ENCODE measurements at regions of chr4 and their contacts with region 1.

Region 1: GRCh38 chr4:373062-373839 is 35.6 kb downstream of the ZNF141 start:
- DNase-seq: no peak
- ATAC-seq: no peak
- H3K4me3 ChIP-seq: no peak overlapping the region
- H3K4me3 Mint-ChIP-seq: no peak overlapping the region
- H3K27ac ChIP-seq: no peak overlapping the region
- H3K27ac Mint-ChIP-seq: no peak overlapping the region
- H3K4me1 ChIP-seq: no peaks in the 10 kb centered on the region
- H3K4me1 Mint-ChIP-seq: no peaks in the 10 kb centered on the region
- H3K27me3 ChIP-seq: no peaks in the 10 kb centered on the region
- H3K27me3 Mint-ChIP-seq: no peaks in the 10 kb centered on the region
- CTCF ChIP-seq: no peak

Region 2: GRCh38 chr4:173671-174332 is 199.4 kb before region 1 on chr4:
- CTCF ChIA-PET with region 1: no interaction called
- POLR2A ChIA-PET with region 1: no interaction called
- intact Hi-C with region 1: no loop called
- DNase-seq: no peak
- ATAC-seq: no peak
- H3K4me3 ChIP-seq: no peak overlapping the region
- H3K4me3 Mint-ChIP-seq: no peak overlapping the region
- H3K27ac ChIP-seq: no peak overlapping the region
- H3K27ac Mint-ChIP-seq: no peak overlapping the region
- H3K4me1 ChIP-seq: no peaks in the 10 kb centered on the region
- H3K4me1 Mint-ChIP-seq: no peaks in the 10 kb centered on the region
- H3K27me3 ChIP-seq: no peaks in the 10 kb centered on the region
- H3K27me3 Mint-ChIP-seq: no peaks in the 10 kb centered on the region
- CTCF ChIP-seq: no peak

Region 3: GRCh38 chr4:445410-445809 is 72.2 kb after region 1 on chr4:
- CTCF ChIA-PET with region 1: no interaction called
- POLR2A ChIA-PET with region 1: no interaction called
- intact Hi-C with region 1: loop called in 1 of 2 experiments (anchors 5 kb)
- DNase-seq: no peak
- ATAC-seq: no peak
- H3K4me3 ChIP-seq: no peak overlapping the region
- H3K4me3 Mint-ChIP-seq: no peak overlapping the region
- H3K27ac ChIP-seq: no peak overlapping the region
- H3K27ac Mint-ChIP-seq: no peak overlapping the region
- H3K4me1 ChIP-seq: no peaks in the 10 kb centered on the region
- H3K4me1 Mint-ChIP-seq: no peaks in the 10 kb centered on the region
- H3K27me3 ChIP-seq: no peaks in the 10 kb centered on the region
- H3K27me3 Mint-ChIP-seq: no peaks in the 10 kb centered on the region
- CTCF ChIP-seq: no peak

Region 4: DNA sequence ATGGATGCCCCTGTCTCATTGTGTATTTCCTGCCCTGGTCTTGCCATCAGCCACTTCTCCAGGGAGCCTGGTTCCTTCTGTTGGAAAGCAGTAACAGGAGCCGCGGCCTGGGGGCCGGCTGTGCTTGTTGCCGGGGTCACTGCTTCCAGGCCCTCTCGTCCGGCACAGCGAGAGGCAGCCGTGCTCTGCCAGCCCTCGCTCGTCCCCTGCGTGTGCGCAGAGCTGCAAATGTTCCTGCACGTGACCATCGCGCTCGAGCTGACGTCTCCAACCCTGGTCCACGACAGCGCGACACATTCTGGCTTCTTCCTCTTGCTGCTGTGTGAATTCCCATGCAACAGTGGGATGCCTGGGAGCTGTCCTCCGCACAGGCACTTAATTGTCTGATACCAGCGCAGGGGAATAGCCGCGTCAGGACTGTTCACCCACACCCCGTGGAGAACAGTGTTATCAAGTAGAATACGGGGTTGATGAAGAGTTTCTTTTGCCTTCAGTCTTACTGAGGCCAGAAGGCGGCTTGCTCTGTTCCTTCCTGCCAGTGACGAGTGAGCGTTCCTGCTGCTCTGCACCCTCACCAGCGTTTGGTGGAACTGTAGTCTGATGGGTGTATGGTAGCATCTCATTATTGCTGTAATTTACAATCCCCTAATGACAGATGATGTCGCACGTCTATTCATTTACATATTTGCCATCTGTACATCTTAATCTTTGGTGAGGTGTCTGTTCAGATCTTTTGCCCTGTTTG is 264.5 kb after region 1 on chr4:
- CTCF ChIA-PET with region 1: no interaction called
- POLR2A ChIA-PET with region 1: no interaction called
- intact Hi-C with region 1: no loop called
- DNase-seq: no peak
- ATAC-seq: no peak
- H3K4me3 ChIP-seq: no peak overlapping the region
- H3K4me3 Mint-ChIP-seq: no peak overlapping the region
- H3K27ac ChIP-seq: no peak overlapping the region
- H3K27ac Mint-ChIP-seq: no peak overlapping the region
- H3K4me1 ChIP-seq: no peaks in the 10 kb centered on the region
- H3K4me1 Mint-ChIP-seq: no peaks in the 10 kb centered on the region
- H3K27me3 ChIP-seq: peaks cover 0 to 6% of the 10 kb centered on the region in 2 experiments
- H3K27me3 Mint-ChIP-seq: peaks cover 10% of the 10 kb centered on the region
- CTCF ChIP-seq: no peak

Region 5: DNA sequence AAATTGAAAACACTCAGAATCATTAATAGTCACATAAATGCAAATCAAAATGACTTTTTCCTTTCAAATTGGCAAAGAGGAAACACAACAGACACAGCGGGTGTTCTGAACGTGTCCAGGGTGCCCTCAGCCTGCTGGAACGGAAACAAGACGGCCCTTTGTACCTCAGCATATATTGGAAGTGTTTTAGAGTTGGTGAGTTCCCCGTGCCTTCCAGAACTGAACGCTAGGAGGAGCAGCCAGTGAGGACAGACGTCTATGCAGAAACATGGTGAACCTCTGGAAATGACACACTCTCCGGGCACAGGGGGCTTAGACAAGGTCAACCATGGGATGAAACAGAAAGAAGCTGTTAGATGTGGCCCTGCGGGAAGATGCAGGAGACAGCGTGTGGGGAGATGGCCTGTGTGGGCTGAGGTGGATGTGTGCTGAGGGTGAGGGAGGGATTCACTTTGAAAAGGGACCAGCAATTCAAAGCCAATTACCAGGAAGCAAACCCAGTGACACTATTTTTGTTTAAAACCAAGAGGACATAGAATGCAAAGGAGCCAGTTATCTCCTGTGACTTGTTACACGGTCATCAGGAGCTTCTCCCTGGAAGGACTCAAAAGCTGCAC is 699.7 kb after region 1 on chr4:
- CTCF ChIA-PET with region 1: no interaction called
- POLR2A ChIA-PET with region 1: no interaction called
- intact Hi-C with region 1: no loop called
- DNase-seq: peak; percentile 18 to 73 (median 46)
- ATAC-seq: peak; percentile 98
- H3K4me3 ChIP-seq: no peak overlapping the region
- H3K4me3 Mint-ChIP-seq: no peak overlapping the region
- H3K27ac ChIP-seq: no peak overlapping the region
- H3K27ac Mint-ChIP-seq: no peak overlapping the region
- H3K4me1 ChIP-seq: peaks cover 5% of the 10 kb centered on the region
- H3K4me1 Mint-ChIP-seq: peaks cover 13% of the 10 kb centered on the region
- H3K27me3 ChIP-seq: no peaks in the 10 kb centered on the region
- H3K27me3 Mint-ChIP-seq: peaks cover 5% of the 10 kb centered on the region
- CTCF ChIP-seq: peak; percentile 71